ENCODE measurements at regions of chr3 and their contacts with region 1.

Region 1: DNA sequence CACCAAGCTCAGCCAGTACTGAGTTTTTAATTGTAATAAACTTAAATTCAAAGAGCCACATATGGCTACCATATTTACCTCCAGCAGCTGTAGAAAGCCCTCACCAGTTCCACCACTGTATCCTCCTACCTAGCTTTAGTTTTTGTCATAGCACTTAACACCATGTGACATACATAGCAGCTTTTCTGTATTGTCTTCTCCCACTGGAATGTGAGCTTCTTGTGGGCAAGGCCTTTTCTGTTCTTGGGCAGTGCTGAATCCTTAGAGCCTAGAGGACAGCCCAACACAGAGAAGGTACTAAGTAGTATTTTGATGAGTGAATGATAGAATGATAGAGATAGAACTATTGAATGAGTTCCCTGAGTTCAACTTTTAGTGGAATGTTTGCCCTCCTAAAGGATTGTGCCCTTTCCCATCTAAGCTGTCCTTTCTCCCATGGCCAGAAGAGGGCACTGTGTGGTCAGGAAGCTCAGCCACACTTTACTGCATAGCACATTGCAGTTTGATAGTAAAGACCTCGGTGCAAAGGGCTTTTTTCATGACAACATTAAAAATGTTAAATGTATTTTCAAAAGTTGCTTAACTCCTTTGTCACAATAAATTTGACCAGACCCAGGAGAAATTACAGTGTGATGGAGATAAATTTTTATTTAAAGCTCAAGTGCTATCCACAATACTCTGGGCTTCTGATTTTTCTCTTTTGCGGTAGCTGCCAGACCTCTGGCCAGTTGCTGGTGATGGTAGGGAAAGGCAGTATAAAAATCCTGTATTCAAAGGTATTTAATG is 115.8 kb downstream of the GHSR start:
- DNase-seq: peak; percentile 75
- ATAC-seq: peak; percentile 94
- H3K4me3 ChIP-seq: no peak overlapping the region
- H3K27ac ChIP-seq: no peak overlapping the region
- H3K4me1 ChIP-seq: no peaks in the 10 kb centered on the region
- H3K27me3 ChIP-seq: no peaks in the 10 kb centered on the region
- CTCF ChIP-seq: peak; percentile 93

Region 2: GRCh38 chr3:172046268-172046915 is 286.1 kb before region 1 on chr3:
- CTCF ChIA-PET with region 1: no interaction called
- POLR2A ChIA-PET with region 1: no interaction called
- intact Hi-C with region 1: loop called (anchors 5 kb)
- DNase-seq: peak; percentile 28
- ATAC-seq: peak; percentile 48
- H3K4me3 ChIP-seq: no peak overlapping the region
- H3K27ac ChIP-seq: no peak overlapping the region
- H3K4me1 ChIP-seq: peaks cover 32% of the 10 kb centered on the region
- H3K27me3 ChIP-seq: no peaks in the 10 kb centered on the region
- CTCF ChIP-seq: no peak